ENCODE measurements at regions of chr6 and their contacts with region 1.

Region 1: DNA sequence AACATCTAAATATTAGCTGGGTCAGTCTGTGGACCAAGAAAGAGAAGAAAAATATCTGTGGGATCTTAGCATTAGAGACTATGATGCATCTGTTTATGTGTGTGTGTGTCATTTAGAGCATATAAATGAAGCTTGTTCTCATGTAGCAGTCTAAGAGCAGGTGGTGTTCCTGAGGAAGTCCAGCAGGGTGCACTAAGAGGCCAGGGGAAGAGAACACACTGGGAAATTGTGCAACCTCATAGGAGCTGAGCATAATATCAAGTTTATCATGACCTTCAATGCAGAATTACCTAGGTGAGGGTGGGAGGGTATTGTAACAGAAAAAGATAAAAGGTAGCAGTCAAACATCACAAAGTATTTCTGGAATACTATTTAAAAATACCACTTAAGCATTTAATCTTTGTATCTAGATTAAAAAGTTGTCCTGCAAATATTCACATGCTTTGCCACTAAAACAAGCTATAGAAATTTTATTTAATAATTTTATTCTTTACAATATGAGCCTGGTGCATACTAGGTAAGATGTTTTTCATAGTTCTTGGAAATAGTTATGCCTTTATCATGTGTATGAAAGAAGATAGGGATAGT is 80.5 kb downstream of the SMPDL3A start:
- DNase-seq: no peak
- ATAC-seq: no peak
- H3K4me3 ChIP-seq: no peak overlapping the region
- H3K4me3 Mint-ChIP-seq: no peak overlapping the region
- H3K27ac ChIP-seq: no peak overlapping the region
- H3K27ac Mint-ChIP-seq: no peak overlapping the region
- H3K4me1 ChIP-seq: no peaks in the 10 kb centered on the region
- H3K4me1 Mint-ChIP-seq: no peaks in the 10 kb centered on the region
- H3K27me3 ChIP-seq: peaks cover 0 to 2% of the 10 kb centered on the region in 2 donors
- H3K27me3 Mint-ChIP-seq: peaks cover 2 to 15% (median 6%) of the 10 kb centered on the region in 5 donors

Region 2: GRCh38 chr6:123316733-123317323 is 447.3 kb after region 1 on chr6:
- CTCF ChIA-PET with region 1: no interaction called
- POLR2A ChIA-PET with region 1: no interaction called
- intact Hi-C with region 1: loop called in 1 of 2 experiments (anchors 1 kb)
- DNase-seq: peak in 2 of 9 donors; percentile 1 to 14
- ATAC-seq: no peak
- H3K4me3 ChIP-seq: no peak overlapping the region
- H3K4me3 Mint-ChIP-seq: no peak overlapping the region
- H3K27ac ChIP-seq: no peak overlapping the region
- H3K27ac Mint-ChIP-seq: no peak overlapping the region
- H3K4me1 ChIP-seq: no peaks in the 10 kb centered on the region
- H3K4me1 Mint-ChIP-seq: no peaks in the 10 kb centered on the region
- H3K27me3 ChIP-seq: no peaks in the 10 kb centered on the region
- H3K27me3 Mint-ChIP-seq: no peaks in the 10 kb centered on the region

Region 3: GRCh38 chr6:123715006-123715875 is 845.7 kb after region 1 on chr6:
- CTCF ChIA-PET with region 1: no interaction called
- POLR2A ChIA-PET with region 1: no interaction called
- intact Hi-C with region 1: loop called in 1 of 2 experiments (anchors 10 kb)
- DNase-seq: no peak
- ATAC-seq: no peak
- H3K4me3 ChIP-seq: no peak overlapping the region
- H3K4me3 Mint-ChIP-seq: no peak overlapping the region
- H3K27ac ChIP-seq: no peak overlapping the region
- H3K27ac Mint-ChIP-seq: no peak overlapping the region
- H3K4me1 ChIP-seq: no peaks in the 10 kb centered on the region
- H3K4me1 Mint-ChIP-seq: no peaks in the 10 kb centered on the region
- H3K27me3 ChIP-seq: no peaks in the 10 kb centered on the region
- H3K27me3 Mint-ChIP-seq: no peaks in the 10 kb centered on the region